Mammary epithelial cell (primary cell): ENCODE measurements at regions of chr1 and their contacts with region 1.

Region 1: DNA sequence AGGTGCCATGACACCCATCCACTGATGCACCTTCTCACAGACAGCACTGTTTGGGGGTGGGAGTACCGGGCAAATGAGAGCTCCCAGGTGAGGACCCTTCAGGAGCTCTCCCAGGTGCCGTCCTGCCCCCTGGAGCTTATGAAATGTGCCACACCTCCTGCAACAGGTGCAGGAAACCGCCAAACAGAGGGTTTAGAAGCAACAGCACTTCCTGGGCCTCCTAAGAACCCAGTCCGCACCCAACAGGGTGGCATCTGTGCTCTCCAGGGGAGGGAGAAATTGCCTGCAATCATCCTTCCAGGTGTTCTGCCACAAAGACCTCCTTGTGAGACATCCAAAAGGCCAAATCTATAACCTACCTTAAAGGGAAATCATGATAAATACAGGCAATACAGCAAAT is 87.7 kb upstream of the ATP1B1 start:
- DNase-seq: no peak
- H3K4me3 ChIP-seq: no peak overlapping the region
- H3K27ac ChIP-seq: no peak overlapping the region
- H3K4me1 ChIP-seq: no peaks in the 10 kb centered on the region
- H3K27me3 ChIP-seq: no peaks in the 10 kb centered on the region
- CTCF ChIP-seq: no peak

Region 2: DNA sequence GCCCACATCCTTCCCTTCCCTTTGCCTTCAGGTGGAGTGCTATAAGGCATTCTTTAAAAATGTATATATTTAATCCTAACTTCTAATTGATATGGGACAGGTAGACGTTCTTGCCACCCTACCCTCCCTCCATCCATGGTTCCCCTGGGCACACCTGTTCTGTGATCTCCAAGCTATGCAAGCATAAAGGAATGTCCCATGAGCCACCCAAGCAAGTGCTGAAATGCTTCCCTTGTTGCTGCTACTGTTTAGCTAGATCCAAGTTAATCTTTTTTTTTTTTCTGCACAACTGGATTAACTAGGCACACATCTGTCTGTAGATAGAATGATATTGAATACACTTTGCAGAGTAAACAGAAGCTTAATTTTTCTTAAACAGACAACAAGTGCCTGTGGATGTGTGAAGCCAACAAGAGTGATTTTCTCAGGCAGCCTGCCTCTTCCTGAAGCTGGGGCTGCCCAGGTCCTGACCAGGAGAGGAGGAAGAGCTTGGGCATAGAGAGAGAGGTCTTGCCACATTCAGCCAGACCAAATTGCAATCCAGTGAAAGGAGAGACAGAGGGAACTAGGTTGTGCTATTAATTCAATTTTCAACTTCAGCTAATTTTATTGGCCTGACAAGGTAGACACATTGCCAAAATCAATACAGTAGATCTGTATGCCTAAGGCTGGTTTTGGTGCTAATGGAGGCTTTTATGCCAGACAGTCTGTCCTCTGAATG is 59.6 kb after region 1 on chr1:
- CTCF ChIA-PET with region 1: no interaction called
- dilution Hi-C with region 1: loop called (anchors 5 kb)
- in situ Hi-C with region 1: no loop called
- intact Hi-C with region 1: no loop called
- DNase-seq: no peak
- H3K4me3 ChIP-seq: no peak overlapping the region
- H3K27ac ChIP-seq: no peak overlapping the region
- H3K4me1 ChIP-seq: no peaks in the 10 kb centered on the region
- H3K27me3 ChIP-seq: no peaks in the 10 kb centered on the region
- CTCF ChIP-seq: no peak